Activated CD8-positive, alpha-beta memory T cell treated with anti-CD3 and anti-CD28 coated beads, Interleukin-2, amount 10 ng/mL, durations not matched to agents 7 days and 5 days (primary cell): ENCODE measurements at regions of chr15 and their contacts with region 1.

Region 1: DNA sequence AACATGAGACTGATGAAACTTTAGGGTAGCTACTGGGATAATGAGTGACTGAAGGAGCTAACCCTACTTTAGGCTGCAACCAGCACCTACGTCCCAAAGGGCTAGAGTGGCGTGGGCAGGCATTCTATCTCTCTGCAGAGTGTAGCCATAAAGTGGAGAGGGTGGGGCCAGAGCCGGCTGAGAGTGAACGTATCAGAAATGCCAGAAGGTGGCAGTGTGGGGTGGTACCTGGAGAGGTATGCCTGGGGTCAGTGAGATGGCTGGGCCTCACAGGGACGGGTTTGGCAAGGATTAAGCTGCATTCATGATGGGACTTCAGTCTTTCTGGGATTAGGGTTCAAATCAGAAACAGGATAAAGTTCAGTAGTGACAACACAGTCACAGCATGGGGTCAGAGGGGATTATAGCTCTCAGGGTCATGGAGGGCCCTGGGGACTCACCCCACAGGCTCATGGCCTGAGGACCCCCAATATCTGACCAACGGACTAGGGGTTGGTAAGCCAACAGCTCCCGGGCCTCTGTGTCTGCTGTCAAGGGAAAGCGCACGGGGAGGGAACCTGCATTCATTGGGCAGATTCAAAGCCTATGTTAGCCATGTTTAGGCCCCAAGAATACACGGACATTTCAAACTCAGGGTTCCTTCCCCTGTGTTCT is 86.5 kb upstream of the FOXB1 start:
- DNase-seq: peak; percentile 90
- ATAC-seq: peak; percentile 65
- H3K4me3 Mint-ChIP-seq: no peak overlapping the region
- H3K27ac Mint-ChIP-seq: peak overlapping the region; percentile 45
- H3K4me1 Mint-ChIP-seq: peaks cover 36% of the 10 kb centered on the region
- H3K27me3 Mint-ChIP-seq: peaks cover 25% of the 10 kb centered on the region

Region 2: DNA sequence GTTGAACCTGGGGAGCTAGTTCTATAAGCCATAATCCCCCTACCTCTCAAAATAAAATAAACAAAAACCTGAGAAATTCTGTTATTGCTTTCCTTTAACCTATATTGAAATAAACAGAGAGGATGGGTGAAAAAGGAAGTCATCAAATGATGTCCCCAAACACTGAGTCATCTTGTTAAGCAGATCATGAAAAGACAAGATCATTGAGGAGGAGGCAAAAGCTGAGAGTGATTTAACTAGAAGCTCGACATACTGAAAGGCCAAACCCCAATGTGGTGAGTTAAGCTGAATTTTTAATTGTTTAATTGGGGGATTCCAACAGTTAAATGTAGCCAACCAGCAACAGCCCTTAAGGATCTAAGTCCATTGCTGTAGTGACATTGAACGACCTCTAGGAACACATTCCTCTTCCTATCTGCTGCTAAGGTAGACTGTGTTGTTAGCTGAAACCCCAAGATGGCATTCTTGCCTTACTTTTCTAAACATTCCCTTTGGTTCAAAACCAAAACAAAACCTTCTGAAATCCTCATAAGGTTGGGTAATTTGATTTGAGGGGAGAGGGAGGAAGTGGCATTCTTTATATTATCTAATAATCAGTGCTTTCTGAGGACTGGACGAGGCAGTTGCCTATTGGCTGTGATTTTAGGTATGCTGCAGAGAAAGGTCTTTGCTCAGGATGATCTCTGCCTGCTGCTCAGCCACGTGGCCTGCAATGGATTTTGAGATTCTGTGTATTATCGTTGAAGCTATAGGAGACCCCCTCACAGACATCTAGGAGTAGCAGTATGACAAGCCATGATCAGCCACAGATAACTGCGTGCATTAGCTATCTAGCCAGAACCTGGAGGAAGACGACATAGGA is 165.8 kb before region 1 on chr15:
- CTCF ChIA-PET with region 1: interaction called, 13 read pairs
- DNase-seq: no peak
- ATAC-seq: peak; percentile 84
- H3K4me3 Mint-ChIP-seq: no peak overlapping the region
- H3K27ac Mint-ChIP-seq: no peak overlapping the region
- H3K4me1 Mint-ChIP-seq: peaks cover 10% of the 10 kb centered on the region
- H3K27me3 Mint-ChIP-seq: peaks cover 24% of the 10 kb centered on the region

Region 3: GRCh38 chr15:59997070-59997701 is 79.6 kb after region 1 on chr15:
- CTCF ChIA-PET with region 1: interaction called, 61 read pairs
- DNase-seq: peak; percentile 90
- ATAC-seq: peak; percentile 96
- H3K4me3 Mint-ChIP-seq: peak overlapping the region; percentile 79
- H3K27ac Mint-ChIP-seq: peak overlapping the region; percentile 82
- H3K4me1 Mint-ChIP-seq: peaks cover 78% of the 10 kb centered on the region
- H3K27me3 Mint-ChIP-seq: peaks cover 96% of the 10 kb centered on the region

Region 4: DNA sequence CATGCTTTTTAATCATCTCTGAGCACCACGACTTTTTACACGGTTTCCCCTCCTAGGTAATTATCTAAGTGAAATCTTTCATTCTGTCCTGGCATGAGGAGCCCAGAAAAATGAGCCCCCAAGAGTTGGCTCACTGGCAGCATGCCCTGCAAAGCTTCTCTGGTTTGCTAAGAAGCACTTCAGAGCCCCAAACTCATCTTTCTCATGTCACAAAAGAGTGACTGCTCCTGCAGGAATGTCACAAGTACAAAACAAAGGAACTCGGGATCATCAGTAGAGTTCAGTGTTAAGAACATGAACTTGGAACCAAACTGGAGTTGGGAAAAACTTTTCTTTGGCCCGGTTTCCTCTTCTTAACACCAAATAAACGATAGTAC is 210.4 kb after region 1 on chr15:
- CTCF ChIA-PET with region 1: interaction called, 13 read pairs
- DNase-seq: no peak
- ATAC-seq: no peak
- H3K4me3 Mint-ChIP-seq: peak overlapping the region; percentile 80
- H3K27ac Mint-ChIP-seq: peak overlapping the region; percentile 90
- H3K4me1 Mint-ChIP-seq: peaks cover 52% of the 10 kb centered on the region
- H3K27me3 Mint-ChIP-seq: peaks cover 4% of the 10 kb centered on the region

Region 5: GRCh38 chr15:60326824-60327654 is 409.4 kb after region 1 on chr15:
- CTCF ChIA-PET with region 1: interaction called, 13 read pairs
- DNase-seq: peak; percentile 52
- ATAC-seq: no peak
- H3K4me3 Mint-ChIP-seq: no peak overlapping the region
- H3K27ac Mint-ChIP-seq: no peak overlapping the region
- H3K4me1 Mint-ChIP-seq: peaks cover 7% of the 10 kb centered on the region
- H3K27me3 Mint-ChIP-seq: peaks cover 76% of the 10 kb centered on the region